Activated CD8-positive, alpha-beta T cell treated with anti-CD3 and anti-CD28 coated beads, Interleukin-2, amount 10 ng/mL, durations not matched to agents 7 days and 5 days (primary cell): ENCODE measurements at regions of chr1 and their contacts with region 1.

Region 1: DNA sequence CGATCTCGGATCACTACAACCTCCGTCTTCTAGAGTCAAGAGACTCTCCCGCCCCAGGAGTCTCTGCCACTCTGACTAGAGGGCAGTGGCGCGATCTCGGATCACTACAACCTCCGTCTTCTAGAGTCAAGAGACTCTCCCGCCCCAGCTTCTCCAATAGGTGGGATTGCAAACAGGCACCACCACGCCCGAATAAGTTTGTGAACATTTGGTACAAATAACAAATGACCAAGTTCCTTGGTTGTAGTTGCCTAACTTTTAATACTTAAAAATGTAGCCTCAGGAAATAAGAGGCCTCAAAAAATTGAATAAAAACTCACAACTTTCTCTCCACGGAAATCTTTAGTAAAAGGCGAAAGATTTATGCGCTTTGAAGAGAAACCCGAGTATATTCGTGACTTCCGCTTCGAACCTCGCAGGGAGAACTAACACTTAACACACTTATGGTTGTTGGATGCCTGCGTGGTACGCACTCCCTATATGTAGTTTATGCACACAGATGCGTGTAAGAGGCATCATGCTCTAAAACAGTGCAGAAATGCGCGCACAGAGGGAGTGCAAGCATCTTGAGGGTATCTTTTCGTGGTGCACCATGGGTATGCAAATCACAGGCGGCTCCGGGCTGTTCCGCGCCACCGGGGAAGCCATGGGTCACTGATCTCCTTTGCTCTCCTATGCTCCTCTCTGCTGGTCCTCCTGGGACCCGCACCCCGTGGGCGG is 11.4 kb downstream of the BTBD19 start:
- DNase-seq: peak; percentile 92
- ATAC-seq: peak; percentile 92
- H3K4me3 Mint-ChIP-seq: peak overlapping the region; percentile 92
- H3K27ac Mint-ChIP-seq: peak overlapping the region; percentile 100
- H3K4me1 Mint-ChIP-seq: peaks cover 51% of the 10 kb centered on the region
- H3K27me3 Mint-ChIP-seq: no peaks in the 10 kb centered on the region

Region 2: GRCh38 chr1:44786138-44786840 is 33.5 kb before region 1 on chr1:
- CTCF ChIA-PET with region 1: interaction called, 22 read pairs
- POLR2A ChIA-PET with region 1: interaction called, 115 read pairs
- DNase-seq: peak; percentile 82
- ATAC-seq: peak; percentile 64
- H3K4me3 Mint-ChIP-seq: peak overlapping the region; percentile 64
- H3K27ac Mint-ChIP-seq: peak overlapping the region; percentile 74
- H3K4me1 Mint-ChIP-seq: peaks cover 42% of the 10 kb centered on the region
- H3K27me3 Mint-ChIP-seq: no peaks in the 10 kb centered on the region

Region 3: GRCh38 chr1:44799770-44800584 is 19.8 kb before region 1 on chr1 and contains the start of gene PLK3:
- CTCF ChIA-PET with region 1: interaction called, 46 read pairs
- POLR2A ChIA-PET with region 1: interaction called, 713 read pairs
- DNase-seq: peak; percentile 99
- ATAC-seq: peak; percentile 77
- H3K4me3 Mint-ChIP-seq: peak within 1 kb of the TSS; percentile 96
- H3K27ac Mint-ChIP-seq: peak within 1 kb of the TSS; percentile 100
- H3K4me1 Mint-ChIP-seq: peaks cover 42% of the 10 kb centered on the region
- H3K27me3 Mint-ChIP-seq: no peaks in the 10 kb centered on the region
- total RNA-seq, gene PLK3: 64.8 to 68.0 TPM

Region 4: GRCh38 chr1:44830900-44831304 is 11.1 kb after region 1 on chr1:
- CTCF ChIA-PET with region 1: interaction called, 5 read pairs
- POLR2A ChIA-PET with region 1: interaction called, 31 read pairs
- DNase-seq: no peak
- ATAC-seq: no peak
- H3K4me3 Mint-ChIP-seq: no peak overlapping the region
- H3K27ac Mint-ChIP-seq: no peak overlapping the region
- H3K4me1 Mint-ChIP-seq: peaks cover 8% of the 10 kb centered on the region
- H3K27me3 Mint-ChIP-seq: no peaks in the 10 kb centered on the region

Region 5: GRCh38 chr1:45339789-45340570 is 520.2 kb after region 1 on chr1 and contains the starts of genes MUTYH and TOE1:
- CTCF ChIA-PET with region 1: no interaction called
- POLR2A ChIA-PET with region 1: interaction called, 10 read pairs
- DNase-seq: peak; percentile 97
- ATAC-seq: peak; percentile 91
- H3K4me3 Mint-ChIP-seq: peak within 1 kb of the TSS; percentile 100
- H3K27ac Mint-ChIP-seq: peak within 1 kb of the TSS; percentile 100
- H3K4me1 Mint-ChIP-seq: peaks cover 53% of the 10 kb centered on the region
- H3K27me3 Mint-ChIP-seq: no peaks in the 10 kb centered on the region
- total RNA-seq, gene MUTYH: 59.8 to 61.8 TPM
- total RNA-seq, gene TOE1: 25.4 to 25.9 TPM